ENCODE measurements at regions of chr18 and their contacts with region 1.

Region 1: DNA sequence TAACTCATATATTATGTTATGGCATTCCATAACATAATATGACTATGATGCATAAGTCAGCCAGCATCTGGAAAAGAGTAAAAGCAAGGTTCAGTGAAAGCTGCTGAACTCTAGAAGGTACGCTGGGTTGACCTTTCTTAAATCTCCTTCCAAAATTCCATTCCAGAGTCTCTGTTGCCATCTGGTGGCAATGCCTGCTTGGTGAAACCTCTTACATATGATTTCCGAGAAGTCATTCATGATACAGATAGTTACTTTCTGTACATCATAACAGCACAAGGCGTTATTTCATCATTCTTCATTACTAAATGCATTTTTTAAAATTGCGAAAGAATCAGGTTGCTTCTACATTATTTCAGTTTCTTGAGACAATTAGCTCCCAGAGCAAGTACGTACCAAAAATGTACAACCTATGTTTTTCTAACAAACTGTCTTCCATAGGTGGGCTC is 7.0 kb upstream of the EPG5 start:
- DNase-seq: peak; percentile 89
- H3K4me3 Mint-ChIP-seq: peak overlapping the region; percentile 55
- H3K27ac Mint-ChIP-seq: no peak overlapping the region
- H3K4me1 Mint-ChIP-seq: peaks cover 6% of the 10 kb centered on the region
- H3K27me3 Mint-ChIP-seq: no peaks in the 10 kb centered on the region
- CTCF ChIP-seq: peak; percentile 88

Region 2: DNA sequence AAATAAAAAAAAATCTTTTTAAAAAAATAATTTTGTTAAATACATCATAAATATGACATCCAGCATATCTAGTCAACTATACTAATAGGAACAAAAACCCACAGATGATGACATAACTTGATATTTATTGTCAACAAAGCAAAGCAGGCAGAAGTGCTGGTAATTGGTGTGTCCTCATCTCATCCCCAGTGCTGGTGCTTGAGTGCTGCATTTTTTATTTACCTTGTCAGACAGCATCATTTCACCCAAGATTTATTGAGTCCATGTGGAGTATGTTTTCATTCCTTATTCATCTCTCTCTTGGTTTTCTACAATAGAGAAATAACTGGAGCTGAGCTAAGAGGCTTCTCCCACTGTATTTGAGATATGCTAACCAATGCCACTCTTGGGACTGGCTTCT is 550.5 kb before region 1 on chr18:
- CTCF ChIA-PET with region 1: no interaction called
- POLR2A ChIA-PET with region 1: no interaction called
- intact Hi-C with region 1: no loop called
- DNase-seq: no peak
- H3K4me3 Mint-ChIP-seq: no peak overlapping the region
- H3K27ac Mint-ChIP-seq: no peak overlapping the region
- H3K4me1 Mint-ChIP-seq: peaks cover 4% of the 10 kb centered on the region
- H3K27me3 Mint-ChIP-seq: no peaks in the 10 kb centered on the region
- CTCF ChIP-seq: no peak

Region 3: DNA sequence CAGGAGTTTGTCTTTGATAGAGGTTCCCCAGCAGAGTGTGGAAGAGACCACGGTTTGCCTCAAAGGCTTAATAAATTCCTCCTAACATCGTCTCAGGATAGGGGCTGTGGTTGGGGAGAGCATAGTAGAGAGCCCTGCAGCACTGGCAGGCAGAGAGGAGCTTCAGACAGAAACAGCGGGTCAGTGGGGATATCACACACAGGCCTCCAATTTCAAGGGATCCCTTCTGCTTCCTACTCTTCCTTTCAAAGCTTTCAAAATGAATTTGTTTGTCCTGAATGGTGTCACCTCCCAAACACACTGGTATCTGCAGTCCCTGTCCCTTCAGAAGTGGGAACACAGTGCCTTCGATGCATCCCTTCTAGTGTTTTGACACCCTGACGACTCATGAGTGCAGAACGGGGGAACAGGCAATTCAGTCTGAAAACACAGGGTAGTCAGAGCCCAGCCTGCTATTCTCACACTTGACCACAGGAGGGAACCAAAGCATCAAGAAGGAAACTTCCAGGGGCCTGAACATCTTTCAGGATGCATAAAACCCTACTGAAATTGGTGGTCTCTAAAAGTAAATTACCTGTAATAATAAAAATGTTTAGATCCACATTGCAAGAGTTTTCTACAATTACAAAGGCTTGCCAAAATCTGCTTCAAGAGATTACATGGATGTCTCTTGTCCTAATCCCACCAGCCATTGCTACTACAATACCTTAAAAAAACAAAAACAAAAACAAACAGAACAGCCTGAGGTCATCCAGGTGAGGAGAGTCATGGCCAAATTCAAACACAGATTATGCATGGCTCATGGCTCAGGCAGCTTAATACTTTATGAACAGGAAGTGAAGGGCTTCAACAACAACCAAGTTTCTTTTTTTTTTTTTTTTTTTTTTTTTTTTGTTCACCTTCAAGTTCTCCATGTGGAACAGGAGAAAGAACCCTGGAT is 309.0 kb before region 1 on chr18:
- CTCF ChIA-PET with region 1: interaction called, 15 read pairs
- POLR2A ChIA-PET with region 1: interaction called, 3 read pairs
- intact Hi-C with region 1: loop called (anchors 1 kb)
- DNase-seq: peak; percentile 74
- H3K4me3 Mint-ChIP-seq: no peak overlapping the region
- H3K27ac Mint-ChIP-seq: no peak overlapping the region
- H3K4me1 Mint-ChIP-seq: peaks cover 11% of the 10 kb centered on the region
- H3K27me3 Mint-ChIP-seq: no peaks in the 10 kb centered on the region
- CTCF ChIP-seq: peak; percentile 93

Region 4: DNA sequence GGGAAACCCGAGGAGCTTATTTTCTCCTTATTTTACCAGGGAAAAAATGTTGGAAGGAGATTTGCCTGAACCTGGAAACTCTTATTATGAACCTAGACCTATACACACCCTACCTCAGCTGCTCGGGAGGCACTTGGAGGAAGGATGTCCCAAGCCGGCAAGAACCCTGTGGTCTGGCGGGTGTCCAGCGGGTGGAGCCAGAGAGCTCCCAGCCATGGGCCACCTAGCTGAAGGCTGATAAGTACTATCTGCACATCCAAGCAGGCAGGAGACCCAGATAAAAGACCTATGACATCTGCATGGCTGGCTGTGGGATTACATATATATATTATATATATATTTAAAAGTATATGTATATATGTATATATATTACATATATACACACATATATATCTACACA is 251.2 kb before region 1 on chr18:
- CTCF ChIA-PET with region 1: interaction called, 4 read pairs
- POLR2A ChIA-PET with region 1: no interaction called
- intact Hi-C with region 1: loop called (anchors 1 kb)
- DNase-seq: peak; percentile 80
- H3K4me3 Mint-ChIP-seq: no peak overlapping the region
- H3K27ac Mint-ChIP-seq: no peak overlapping the region
- H3K4me1 Mint-ChIP-seq: no peaks in the 10 kb centered on the region
- H3K27me3 Mint-ChIP-seq: peaks cover 11% of the 10 kb centered on the region
- CTCF ChIP-seq: peak; percentile 83

Region 5: GRCh38 chr18:45910405-45911023 is 63.6 kb before region 1 on chr18:
- CTCF ChIA-PET with region 1: interaction called, 3 read pairs
- POLR2A ChIA-PET with region 1: no interaction called
- intact Hi-C with region 1: loop called (anchors 2 kb)
- DNase-seq: peak; percentile 61
- H3K4me3 Mint-ChIP-seq: no peak overlapping the region
- H3K27ac Mint-ChIP-seq: no peak overlapping the region
- H3K4me1 Mint-ChIP-seq: no peaks in the 10 kb centered on the region
- H3K27me3 Mint-ChIP-seq: no peaks in the 10 kb centered on the region
- CTCF ChIP-seq: peak; percentile 74

Region 6: DNA sequence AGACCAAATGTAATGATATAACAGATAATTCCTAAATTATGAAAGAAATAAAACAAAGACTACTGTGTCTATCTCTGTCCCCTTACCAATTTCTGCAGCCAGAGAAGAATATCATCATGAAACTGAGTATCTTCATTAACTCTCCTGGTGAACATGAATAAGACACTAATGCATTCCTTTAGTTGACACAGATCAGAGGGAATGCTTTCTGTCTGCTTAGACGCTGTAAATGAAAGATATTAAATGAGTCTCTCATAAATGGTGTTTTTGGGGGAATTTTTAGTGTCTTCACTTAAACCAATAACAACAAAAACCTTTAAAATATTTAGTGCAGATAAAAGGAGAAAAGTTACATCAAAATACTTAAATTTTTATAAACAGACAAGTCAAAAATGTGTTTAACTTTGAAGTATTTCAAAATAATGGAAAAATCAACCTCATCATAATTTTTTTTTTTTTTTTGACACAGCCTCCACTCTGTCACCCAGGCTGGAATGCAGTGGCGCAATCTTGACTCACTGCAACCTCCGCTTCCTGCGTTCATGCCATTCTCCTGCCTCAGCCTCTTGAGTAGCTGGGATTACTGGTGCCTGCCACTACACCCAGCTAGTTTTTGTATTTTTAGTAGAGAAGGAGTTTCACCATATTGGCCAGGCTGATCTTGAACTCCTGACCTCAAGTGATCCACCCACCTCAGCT is 22.9 kb before region 1 on chr18:
- CTCF ChIA-PET with region 1: interaction called, 10 read pairs
- POLR2A ChIA-PET with region 1: interaction called, 3 read pairs
- intact Hi-C with region 1: no loop called
- DNase-seq: peak; percentile 86
- H3K4me3 Mint-ChIP-seq: no peak overlapping the region
- H3K27ac Mint-ChIP-seq: peak overlapping the region; percentile 64
- H3K4me1 Mint-ChIP-seq: peaks cover 46% of the 10 kb centered on the region
- H3K27me3 Mint-ChIP-seq: no peaks in the 10 kb centered on the region
- CTCF ChIP-seq: no peak

Region 7: GRCh38 chr18:46028536-46028891 is 54.4 kb after region 1 on chr18:
- CTCF ChIA-PET with region 1: no interaction called
- POLR2A ChIA-PET with region 1: no interaction called
- intact Hi-C with region 1: no loop called
- DNase-seq: no peak
- H3K4me3 Mint-ChIP-seq: no peak overlapping the region
- H3K27ac Mint-ChIP-seq: no peak overlapping the region
- H3K4me1 Mint-ChIP-seq: peaks cover 3% of the 10 kb centered on the region
- H3K27me3 Mint-ChIP-seq: no peaks in the 10 kb centered on the region
- CTCF ChIP-seq: no peak

Measured in MCF 10A (cell line).